Stomach (tissue), 19 donors: ENCODE measurements at regions of chr6 and their contacts with region 1.

Region 1: DNA sequence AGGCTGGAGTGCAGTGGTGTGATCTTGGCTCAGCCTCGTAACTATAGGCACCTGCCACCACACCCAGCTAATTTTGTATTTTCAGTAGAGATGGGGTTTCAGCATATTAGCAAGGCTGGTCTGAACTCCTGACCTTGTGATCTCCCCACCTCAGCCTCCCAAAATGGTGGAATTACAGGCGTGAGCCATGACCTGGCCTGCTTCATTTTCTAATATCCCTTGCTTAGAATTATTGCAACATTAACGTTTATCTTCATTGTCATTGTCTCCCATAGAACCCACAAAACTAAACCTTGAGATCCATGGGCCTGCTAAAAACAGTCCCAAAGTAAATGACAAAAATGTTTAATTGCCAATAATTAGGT is 6.1 kb downstream of the EEF1A1 start:
- DNase-seq: peak in 1 of 2 donors; percentile 51
- H3K4me3 ChIP-seq: no peak overlapping the region
- H3K27ac ChIP-seq: peak overlapping the region in 3 of 5 donors; percentile 18 to 74 (median 54)
- H3K4me1 ChIP-seq: peaks cover 36 to 56% (median 45%) of the 10 kb centered on the region in 4 donors
- H3K27me3 ChIP-seq: no peaks in the 10 kb centered on the region
- CTCF ChIP-seq: no peak
- EP300 ChIP-seq: no peak
- POLR2A ChIP-seq: no peak

Region 2: DNA sequence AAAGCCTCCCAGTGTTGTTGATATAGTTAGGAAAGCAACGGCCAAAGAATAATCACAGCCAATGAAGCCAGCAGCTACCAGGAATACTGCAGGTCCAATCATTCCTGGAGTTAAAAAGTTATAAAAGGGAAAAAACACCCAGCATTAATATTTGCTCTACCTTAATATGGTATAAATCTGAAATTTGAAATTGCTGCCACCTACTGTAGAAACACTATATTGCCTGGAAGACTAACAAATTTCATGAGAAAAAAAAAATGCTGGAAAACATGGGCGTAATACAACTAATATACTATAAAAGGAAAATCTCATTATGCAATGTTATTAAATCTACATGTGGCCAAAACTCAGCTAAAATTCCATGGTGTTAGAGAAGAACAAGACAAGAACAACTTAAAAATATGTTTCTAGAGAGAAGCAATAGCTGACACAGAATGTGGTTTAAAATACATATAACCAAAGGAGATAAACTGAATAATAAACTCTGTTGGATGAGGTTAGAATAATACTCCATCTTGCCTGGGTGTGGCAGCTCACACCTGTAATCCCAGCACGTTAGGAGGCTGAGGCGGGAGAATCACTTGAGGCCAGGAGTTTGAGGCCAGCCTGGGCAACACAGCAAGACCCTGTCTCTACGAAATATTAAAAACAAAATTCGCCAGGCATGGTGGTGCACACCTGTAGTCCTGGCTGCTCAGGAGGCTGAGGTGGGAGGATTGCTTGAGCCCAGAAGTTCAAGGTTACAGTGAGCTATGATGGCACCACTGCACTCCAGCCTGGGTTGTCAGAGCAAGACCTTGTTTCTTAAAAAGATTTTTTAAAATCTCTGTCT is 95.9 kb after region 1 on chr6:
- intact Hi-C with region 1: loop called (anchors 5 kb)
- DNase-seq: peak in 1 of 2 donors; percentile 79
- H3K4me3 ChIP-seq: no peak overlapping the region
- H3K27ac ChIP-seq: no peak overlapping the region
- H3K4me1 ChIP-seq: peaks cover 0 to 9% (median 3%) of the 10 kb centered on the region in 4 donors
- H3K27me3 ChIP-seq: no peaks in the 10 kb centered on the region
- CTCF ChIP-seq: peak in 5 of 7 experiments; percentile 53 to 65 (median 63)
- EP300 ChIP-seq: no peak
- POLR2A ChIP-seq: no peak